ENCODE measurements at regions of chr10 and their contacts with region 1.

Region 1: GRCh38 chr10:86899670-86900276 is 57.6 kb downstream of the MMRN2 start:
- DNase-seq: peak in 1 of 3 donors; percentile 90
- ATAC-seq: peak; percentile 84
- H3K4me3 ChIP-seq: no peak overlapping the region
- H3K4me1 ChIP-seq: no peaks in the 10 kb centered on the region
- CTCF ChIP-seq: peak; percentile 46

Region 2: DNA sequence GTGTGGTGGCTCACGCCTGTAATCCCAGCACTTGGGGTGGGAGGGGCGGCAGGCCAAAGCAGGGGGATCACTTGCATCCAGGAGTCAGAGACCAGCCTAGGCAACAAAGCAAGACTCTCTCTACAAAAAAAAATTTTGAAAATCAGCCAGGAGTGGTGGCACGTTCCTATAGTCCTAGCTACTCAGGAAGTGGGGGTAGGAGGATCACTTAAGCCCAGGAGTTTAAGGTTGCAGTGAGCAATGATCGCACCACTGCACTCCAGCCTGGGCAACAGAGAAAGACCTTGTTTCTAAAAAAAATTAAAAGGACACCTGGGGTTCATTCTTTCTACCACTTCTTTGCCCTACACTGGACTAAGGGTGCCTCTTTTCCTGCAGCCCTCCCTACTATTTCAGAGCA is 393.3 kb before region 1 on chr10:
- intact Hi-C with region 1: no loop called
- DNase-seq: no peak
- ATAC-seq: no peak
- H3K4me3 ChIP-seq: no peak overlapping the region
- H3K4me1 ChIP-seq: no peaks in the 10 kb centered on the region
- CTCF ChIP-seq: no peak

Region 3: DNA sequence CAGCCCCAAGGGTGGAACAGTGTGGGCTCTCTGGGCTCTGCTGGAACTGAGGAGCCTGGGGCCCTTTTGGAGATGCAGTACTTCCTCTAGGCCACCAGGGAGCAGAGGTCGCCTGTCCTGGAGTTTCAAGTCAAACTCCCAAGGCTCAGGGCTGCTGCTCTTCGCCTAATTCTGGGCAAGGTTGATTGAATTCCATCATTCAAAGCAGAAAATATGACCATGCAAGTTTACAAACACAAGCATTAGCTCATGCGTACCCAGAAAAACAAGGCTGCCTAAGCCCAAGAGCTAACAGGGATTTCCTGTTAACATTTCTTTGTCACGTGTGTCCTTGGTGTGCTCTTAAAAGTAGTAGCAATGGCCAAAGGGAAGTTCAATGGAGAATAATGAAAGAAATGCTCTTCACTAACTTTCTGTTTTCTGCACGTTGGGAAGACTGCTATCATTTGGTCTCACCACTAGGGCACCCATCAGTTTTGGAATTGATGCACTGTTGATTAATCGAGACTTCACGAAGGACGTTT is 211.3 kb before region 1 on chr10:
- intact Hi-C with region 1: loop called in 1 of 2 experiments (anchors 5 kb)
- DNase-seq: peak in 2 of 3 donors; percentile 55 to 62
- ATAC-seq: peak; percentile 85
- H3K4me3 ChIP-seq: no peak overlapping the region
- H3K4me1 ChIP-seq: no peaks in the 10 kb centered on the region
- CTCF ChIP-seq: peak; percentile 90

Region 4: GRCh38 chr10:86706401-86706841 is 193.4 kb before region 1 on chr10:
- intact Hi-C with region 1: loop called in 1 of 2 experiments (anchors 10 kb)
- DNase-seq: peak in 1 of 3 donors; percentile 48
- ATAC-seq: no peak
- H3K4me3 ChIP-seq: no peak overlapping the region
- H3K4me1 ChIP-seq: peaks cover 7% of the 10 kb centered on the region
- CTCF ChIP-seq: no peak

Measured in mucosa of descending colon (tissue), 3 donors.